ENCODE measurements at regions of chr7 and their contacts with region 1.

Region 1: GRCh38 chr7:28921822-28922221 is 36.3 kb downstream of the TRIL start:
- DNase-seq: peak; percentile 71 to 81 (median 80)
- H3K4me3 ChIP-seq: no peak overlapping the region
- H3K27ac ChIP-seq: no peak overlapping the region
- H3K4me1 ChIP-seq: peaks cover 0 to 8% (median 4%) of the 10 kb centered on the region in 4 experiments
- H3K27me3 ChIP-seq: peaks cover 0 to 2% (median 0%) of the 10 kb centered on the region in 5 experiments

Region 2: DNA sequence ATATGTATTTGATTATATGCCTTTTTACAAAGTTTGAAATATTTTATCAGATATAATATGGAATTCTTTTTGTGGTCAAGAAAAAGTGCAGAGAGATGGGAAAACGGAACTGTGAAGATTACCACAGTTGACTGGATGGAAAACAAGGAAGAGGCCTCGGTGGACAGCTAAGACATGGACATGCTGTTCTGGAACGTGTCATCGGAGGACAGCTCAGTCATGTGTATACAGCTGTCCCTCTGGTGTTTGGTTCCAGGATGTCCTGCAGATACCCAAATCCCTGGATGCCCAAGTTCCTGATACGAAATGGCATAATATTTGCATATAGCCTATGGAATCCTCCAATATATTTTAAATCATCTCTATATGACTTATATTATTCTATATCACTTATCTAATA is 13.0 kb before region 1 on chr7:
- CTCF ChIA-PET with region 1: interaction called, 19 read pairs
- POLR2A ChIA-PET with region 1: no interaction called
- DNase-seq: no peak
- H3K4me3 ChIP-seq: no peak overlapping the region
- H3K27ac ChIP-seq: no peak overlapping the region
- H3K4me1 ChIP-seq: no peaks in the 10 kb centered on the region
- H3K27me3 ChIP-seq: no peaks in the 10 kb centered on the region

Region 3: DNA sequence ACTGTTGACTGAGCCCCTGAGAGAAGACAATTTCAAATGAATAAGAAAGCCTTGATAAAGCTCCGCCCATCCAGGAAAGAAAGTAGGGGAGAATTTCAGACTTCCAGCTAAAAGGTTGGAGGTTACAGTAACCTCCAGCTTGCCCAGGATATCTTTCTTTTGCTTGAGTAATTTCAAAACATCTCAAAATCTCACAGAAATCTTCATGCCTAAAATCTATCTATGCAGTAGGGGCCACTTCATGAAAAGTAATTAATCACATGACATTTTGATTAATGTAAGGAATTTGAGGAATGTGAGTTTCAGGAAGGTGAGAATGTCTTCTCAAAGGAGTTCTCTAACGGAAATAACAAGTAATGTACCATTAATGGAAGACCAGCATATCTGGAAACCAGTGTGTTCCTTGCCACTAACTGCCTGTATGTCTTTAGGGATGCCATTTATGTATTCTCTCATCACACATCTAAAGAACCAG is 12.1 kb after region 1 on chr7:
- CTCF ChIA-PET with region 1: interaction called, 45 read pairs
- POLR2A ChIA-PET with region 1: no interaction called
- DNase-seq: no peak
- H3K4me3 ChIP-seq: no peak overlapping the region
- H3K27ac ChIP-seq: no peak overlapping the region
- H3K4me1 ChIP-seq: peaks cover 0 to 6% (median 0%) of the 10 kb centered on the region in 4 experiments
- H3K27me3 ChIP-seq: no peaks in the 10 kb centered on the region

Region 4: DNA sequence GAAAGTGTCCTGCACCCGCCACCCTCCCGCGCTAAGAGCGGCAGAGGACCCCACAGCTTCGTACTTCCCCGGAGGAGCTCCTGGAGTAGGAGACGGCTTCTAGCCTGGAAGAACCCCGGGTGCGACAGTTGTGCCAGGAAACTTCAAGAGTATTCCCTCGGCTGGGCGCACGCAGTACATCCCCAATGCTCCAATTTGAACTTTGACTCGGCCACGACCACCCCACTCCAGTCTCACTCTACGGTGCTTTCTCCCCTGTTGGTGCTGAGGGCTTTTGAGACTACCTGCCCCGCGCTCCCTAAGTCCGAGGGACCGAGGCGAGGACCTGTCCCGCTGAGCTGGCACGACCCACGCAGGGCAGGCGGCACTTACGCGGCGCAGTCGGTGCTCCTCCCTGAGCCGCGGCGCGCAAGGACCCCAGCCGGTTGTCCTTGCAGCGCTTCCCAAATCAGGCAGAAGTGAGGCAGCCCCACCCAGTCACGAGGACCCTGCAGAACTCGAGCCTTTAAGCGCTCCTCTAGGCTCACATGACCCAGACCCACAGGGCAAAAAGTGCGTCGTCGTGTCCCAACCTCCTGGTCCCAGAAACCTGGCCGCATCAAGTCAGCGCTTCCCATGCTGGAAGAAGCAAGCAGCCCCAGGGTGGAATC is 224.4 kb after region 1 on chr7 and contains the start of gene CPVL:
- CTCF ChIA-PET with region 1: no interaction called
- POLR2A ChIA-PET with region 1: no interaction called
- DNase-seq: peak; percentile 50 to 70 (median 59)
- H3K4me3 ChIP-seq: peak within 1 kb of the TSS; percentile 11 to 82 (median 67)
- H3K27ac ChIP-seq: peak within 1 kb of the TSS in 1 of 2 experiments; percentile 20
- H3K4me1 ChIP-seq: peaks cover 0 to 31% (median 15%) of the 10 kb centered on the region in 4 experiments
- H3K27me3 ChIP-seq: peaks cover 0 to 26% (median 2%) of the 10 kb centered on the region in 5 experiments

Region 5: GRCh38 chr7:29345600-29345999 is 423.8 kb after region 1 on chr7:
- CTCF ChIA-PET with region 1: interaction called, 23 read pairs
- POLR2A ChIA-PET with region 1: no interaction called
- DNase-seq: peak; percentile 54 to 70 (median 67)
- H3K4me3 ChIP-seq: no peak overlapping the region
- H3K27ac ChIP-seq: no peak overlapping the region
- H3K4me1 ChIP-seq: peaks cover 18 to 48% (median 38%) of the 10 kb centered on the region in 4 experiments
- H3K27me3 ChIP-seq: no peaks in the 10 kb centered on the region

Region 6: DNA sequence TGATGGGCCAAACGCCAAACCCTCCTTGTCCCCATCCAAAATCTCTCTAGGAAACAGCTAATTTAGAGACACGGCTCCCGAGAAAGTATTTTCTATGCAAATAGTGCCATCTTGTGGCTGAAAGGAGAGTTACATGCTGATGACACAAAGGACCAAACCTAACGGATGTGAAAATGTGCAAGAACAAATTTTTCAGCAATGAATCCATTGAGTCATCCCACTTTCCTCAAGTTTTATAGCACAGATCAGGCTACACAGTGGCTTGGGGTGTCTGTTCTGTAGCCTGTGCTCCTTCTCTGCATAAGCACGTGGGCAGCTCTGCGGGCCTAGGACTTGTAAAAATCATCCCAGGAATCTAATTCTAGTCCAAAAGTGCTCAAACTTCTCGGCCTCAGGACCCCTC is 487.0 kb after region 1 on chr7:
- CTCF ChIA-PET with region 1: interaction called, 168 read pairs
- POLR2A ChIA-PET with region 1: no interaction called
- DNase-seq: peak; percentile 61 to 79 (median 64)
- H3K4me3 ChIP-seq: no peak overlapping the region
- H3K27ac ChIP-seq: no peak overlapping the region
- H3K4me1 ChIP-seq: no peaks in the 10 kb centered on the region
- H3K27me3 ChIP-seq: no peaks in the 10 kb centered on the region

Measured in common myeloid progenitor, CD34-positive (primary cell).